Sigmoid colon (tissue), 7 donors: ENCODE measurements at regions of chr2 and their contacts with region 1.

Region 1: GRCh38 chr2:217836901-217837491 is 165.8 kb downstream of the TNS1 start:
- DNase-seq: peak; percentile 97
- H3K4me3 ChIP-seq: no peak overlapping the region
- H3K27ac ChIP-seq: peak overlapping the region; percentile 85 to 98 (median 92)
- H3K4me1 ChIP-seq: peaks cover 0 to 99% (median 99%) of the 10 kb centered on the region in 4 donors
- H3K27me3 ChIP-seq: no peaks in the 10 kb centered on the region
- CTCF ChIP-seq: no peak
- EP300 ChIP-seq: peak in 3 of 4 donors; percentile 24 to 88 (median 68)
- POLR2A ChIP-seq: no peak

Region 2: DNA sequence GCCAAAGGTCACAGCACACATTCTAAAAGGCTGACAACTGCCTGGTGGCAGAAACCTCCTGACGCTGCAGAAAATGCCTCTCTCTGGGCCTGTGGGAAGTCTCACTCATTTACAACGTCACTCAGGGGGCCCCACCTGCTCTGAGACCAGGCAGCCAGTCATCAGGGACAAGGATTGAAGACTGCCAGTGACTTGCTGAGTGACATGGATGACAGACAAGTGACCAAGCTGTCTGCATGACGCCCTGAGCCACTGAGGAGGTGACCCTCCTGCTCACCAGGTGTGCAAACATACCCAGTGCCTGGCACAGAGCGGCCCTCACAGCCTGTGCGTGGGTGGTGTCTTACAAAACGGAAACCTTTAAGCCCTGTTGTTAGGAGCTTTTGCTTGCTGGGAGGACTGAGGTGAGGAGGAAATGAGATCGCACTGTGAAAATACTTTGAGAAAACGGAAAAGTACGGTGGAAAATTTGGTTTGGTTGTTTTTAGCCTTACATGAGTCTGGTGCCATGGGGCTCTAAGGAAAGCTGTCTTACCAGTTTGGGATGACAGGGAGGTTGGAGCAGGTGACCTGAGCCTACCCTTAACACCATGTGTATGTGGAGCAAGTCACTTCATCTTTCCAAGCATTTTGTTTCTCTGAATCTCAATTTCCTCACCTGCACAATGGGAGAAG is 226.5 kb before region 1 on chr2:
- intact Hi-C with region 1: no loop called
- DNase-seq: no peak
- H3K4me3 ChIP-seq: no peak overlapping the region
- H3K27ac ChIP-seq: no peak overlapping the region
- H3K4me1 ChIP-seq: peaks cover 0 to 4% (median 0%) of the 10 kb centered on the region in 4 donors
- H3K27me3 ChIP-seq: no peaks in the 10 kb centered on the region
- CTCF ChIP-seq: no peak
- EP300 ChIP-seq: no peak
- POLR2A ChIP-seq: no peak

Region 3: GRCh38 chr2:217851191-217852020 is 14.4 kb after region 1 on chr2:
- intact Hi-C with region 1: loop called (anchors 2 kb)
- DNase-seq: peak; percentile 86
- H3K4me3 ChIP-seq: peak overlapping the region in 1 of 4 donors; percentile 0
- H3K27ac ChIP-seq: peak overlapping the region; percentile 83 to 98 (median 92)
- H3K4me1 ChIP-seq: peaks cover 0 to 100% (median 99%) of the 10 kb centered on the region in 4 donors
- H3K27me3 ChIP-seq: no peaks in the 10 kb centered on the region
- CTCF ChIP-seq: no peak
- EP300 ChIP-seq: no peak
- POLR2A ChIP-seq: no peak